Calu3 (cell line): ENCODE measurements at regions of chr6 and their contacts with region 1.

Region 1: DNA sequence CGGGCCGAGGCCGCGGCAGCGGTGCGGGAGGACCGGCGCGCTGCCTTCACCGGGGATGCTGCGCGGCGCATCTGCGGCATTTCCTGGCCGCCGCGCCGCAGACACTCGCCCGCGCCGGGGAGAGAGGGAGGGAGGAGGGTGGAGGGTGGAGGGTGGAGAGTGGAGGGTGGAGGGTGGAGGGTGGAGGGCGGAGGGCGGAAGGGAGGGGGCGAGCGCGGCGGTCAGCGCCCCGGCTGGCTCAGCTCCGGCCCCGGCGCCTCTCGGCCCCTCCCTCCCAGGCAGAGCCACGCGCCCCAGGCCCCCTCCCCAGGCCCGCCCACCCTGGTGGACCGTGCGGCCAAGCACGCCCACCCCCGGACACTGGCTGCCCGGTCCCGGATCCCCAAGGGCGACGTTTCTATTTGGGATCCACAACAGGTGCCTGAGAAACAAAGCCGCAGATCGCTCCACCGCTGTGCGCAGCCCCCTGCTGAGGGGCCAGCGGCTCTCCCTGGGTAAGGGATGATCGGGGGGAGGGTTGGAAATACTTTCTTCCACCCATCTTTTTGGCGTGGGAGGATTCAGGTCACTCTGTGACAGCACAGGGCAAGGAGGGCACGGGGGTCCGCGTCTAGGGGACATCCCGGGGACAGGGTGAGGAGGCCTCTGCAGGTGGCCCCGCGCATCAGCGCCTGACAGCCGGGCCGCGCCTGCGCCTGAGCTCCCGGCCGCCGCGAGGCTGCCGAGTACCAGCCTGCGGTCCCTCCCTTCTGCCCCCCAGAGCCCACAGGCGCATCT is 111.1 kb upstream of the BEND6 start:
- DNase-seq: peak; percentile 89
- H3K4me3 Mint-ChIP-seq: peak overlapping the region; percentile 90
- H3K27ac Mint-ChIP-seq: peak overlapping the region; percentile 54
- H3K4me1 Mint-ChIP-seq: peaks cover 31% of the 10 kb centered on the region
- H3K27me3 Mint-ChIP-seq: no peaks in the 10 kb centered on the region
- CTCF ChIP-seq: peak; percentile 71

Region 2: DNA sequence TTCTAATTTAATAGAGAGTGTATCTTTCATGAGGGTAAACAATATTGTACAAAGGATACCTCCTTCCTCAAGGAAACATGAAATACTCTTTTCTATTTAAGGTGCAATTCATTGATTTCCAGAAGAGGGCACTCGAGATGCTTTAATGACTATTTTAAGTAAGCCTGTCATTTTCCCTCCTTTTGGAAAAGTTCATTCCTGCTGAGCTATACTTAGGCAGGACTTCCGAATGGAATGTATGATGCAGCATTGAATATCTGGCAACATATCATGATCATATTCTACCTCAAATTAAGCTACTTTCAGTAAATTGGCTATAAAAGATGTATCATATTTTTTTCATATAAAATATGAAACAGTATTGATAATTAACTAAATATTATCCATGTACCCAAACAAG is 206.1 kb before region 1 on chr6:
- CTCF ChIA-PET with region 1: no interaction called
- intact Hi-C with region 1: loop called (anchors 1 kb)
- DNase-seq: no peak
- H3K4me3 Mint-ChIP-seq: no peak overlapping the region
- H3K27ac Mint-ChIP-seq: peak overlapping the region; percentile 20
- H3K4me1 Mint-ChIP-seq: peaks cover 14% of the 10 kb centered on the region
- H3K27me3 Mint-ChIP-seq: no peaks in the 10 kb centered on the region
- CTCF ChIP-seq: peak; percentile 27

Region 3: DNA sequence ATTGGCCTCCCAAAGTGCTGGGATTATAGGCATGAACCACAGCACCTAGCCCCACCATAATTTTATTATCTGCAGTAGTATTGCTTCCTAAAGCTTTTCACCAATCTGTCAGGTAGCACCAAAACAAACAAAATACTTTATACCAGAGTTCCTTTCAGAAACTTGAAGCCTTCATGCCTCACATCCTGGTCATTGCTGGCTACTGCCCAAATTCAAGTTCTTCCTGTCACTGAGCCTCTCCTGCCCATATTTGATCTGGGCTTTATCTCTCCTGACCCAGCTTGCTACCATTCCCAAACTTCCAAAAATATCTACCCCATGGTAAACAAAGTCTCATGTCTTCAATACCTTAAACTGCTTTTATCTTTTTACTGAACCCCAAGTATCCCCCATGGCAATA is 166.2 kb before region 1 on chr6:
- CTCF ChIA-PET with region 1: no interaction called
- intact Hi-C with region 1: no loop called
- DNase-seq: no peak
- H3K4me3 Mint-ChIP-seq: no peak overlapping the region
- H3K27ac Mint-ChIP-seq: no peak overlapping the region
- H3K4me1 Mint-ChIP-seq: peaks cover 15% of the 10 kb centered on the region
- H3K27me3 Mint-ChIP-seq: no peaks in the 10 kb centered on the region
- CTCF ChIP-seq: no peak

Region 4: GRCh38 chr6:56708810-56709597 is 134.8 kb before region 1 on chr6:
- CTCF ChIA-PET with region 1: interaction called, 4 read pairs
- intact Hi-C with region 1: loop called (anchors 5 kb)
- DNase-seq: no peak
- H3K4me3 Mint-ChIP-seq: peak overlapping the region; percentile 5
- H3K27ac Mint-ChIP-seq: peak overlapping the region; percentile 52
- H3K4me1 Mint-ChIP-seq: peaks cover 36% of the 10 kb centered on the region
- H3K27me3 Mint-ChIP-seq: no peaks in the 10 kb centered on the region
- CTCF ChIP-seq: peak; percentile 35

Region 5: GRCh38 chr6:56802584-56802983 is 41.2 kb before region 1 on chr6:
- CTCF ChIA-PET with region 1: no interaction called
- intact Hi-C with region 1: loop called (anchors 5 kb)
- DNase-seq: peak; percentile 55
- H3K4me3 Mint-ChIP-seq: no peak overlapping the region
- H3K27ac Mint-ChIP-seq: peak overlapping the region; percentile 44
- H3K4me1 Mint-ChIP-seq: peaks cover 64% of the 10 kb centered on the region
- H3K27me3 Mint-ChIP-seq: no peaks in the 10 kb centered on the region
- CTCF ChIP-seq: no peak

Region 6: GRCh38 chr6:56808871-56809359 is 34.8 kb before region 1 on chr6:
- CTCF ChIA-PET with region 1: interaction called, 10 read pairs
- intact Hi-C with region 1: loop called (anchors 5 kb)
- DNase-seq: peak; percentile 31
- H3K4me3 Mint-ChIP-seq: peak overlapping the region; percentile 3
- H3K27ac Mint-ChIP-seq: peak overlapping the region; percentile 5
- H3K4me1 Mint-ChIP-seq: peaks cover 51% of the 10 kb centered on the region
- H3K27me3 Mint-ChIP-seq: no peaks in the 10 kb centered on the region
- CTCF ChIP-seq: no peak

Region 7: DNA sequence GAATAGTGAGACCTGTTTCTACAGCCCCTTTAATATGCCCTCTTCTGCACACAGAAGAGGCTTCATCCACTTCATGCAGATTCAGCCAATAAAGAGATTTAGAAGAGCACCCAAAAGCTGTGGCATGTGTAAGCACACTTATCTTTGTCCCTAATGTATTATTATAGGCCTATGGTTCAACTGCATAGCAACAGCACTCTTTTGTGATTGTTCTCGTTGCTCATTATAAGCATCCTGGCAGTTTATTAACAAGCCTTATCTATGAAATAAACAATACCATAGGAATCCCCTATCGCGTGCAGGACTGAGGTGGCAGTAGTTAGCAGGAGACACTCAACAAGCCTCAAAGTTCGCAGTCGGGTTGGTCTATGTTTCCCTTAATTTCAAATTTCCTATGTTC is 27.4 kb before region 1 on chr6:
- CTCF ChIA-PET with region 1: no interaction called
- intact Hi-C with region 1: loop called (anchors 2 kb)
- DNase-seq: peak; percentile 20
- H3K4me3 Mint-ChIP-seq: peak overlapping the region; percentile 8
- H3K27ac Mint-ChIP-seq: peak overlapping the region; percentile 2
- H3K4me1 Mint-ChIP-seq: peaks cover 48% of the 10 kb centered on the region
- H3K27me3 Mint-ChIP-seq: no peaks in the 10 kb centered on the region
- CTCF ChIP-seq: no peak

Region 8: GRCh38 chr6:56890683-56891429 is 47.1 kb after region 1 on chr6:
- CTCF ChIA-PET with region 1: no interaction called
- intact Hi-C with region 1: no loop called
- DNase-seq: no peak
- H3K4me3 Mint-ChIP-seq: no peak overlapping the region
- H3K27ac Mint-ChIP-seq: no peak overlapping the region
- H3K4me1 Mint-ChIP-seq: peaks cover 27% of the 10 kb centered on the region
- H3K27me3 Mint-ChIP-seq: no peaks in the 10 kb centered on the region
- CTCF ChIP-seq: no peak